ENCODE measurements at regions of chr13 and their contacts with region 1.

Region 1: GRCh38 chr13:74316547-74316946 is 182.3 kb upstream of the KLF12 start:
- DNase-seq: peak in 1 of 35 experiments; percentile 3
- ATAC-seq: peak in 2 of 4 experiments; percentile 38 to 52
- H3K4me3 ChIP-seq: no peak overlapping the region
- H3K4me3 Mint-ChIP-seq: no peak overlapping the region
- H3K27ac ChIP-seq: no peak overlapping the region
- H3K27ac Mint-ChIP-seq: peak overlapping the region in 1 of 2 donors; percentile 45
- H3K4me1 ChIP-seq: peaks cover 0 to 4% of the 10 kb centered on the region in 2 experiments
- H3K4me1 Mint-ChIP-seq: peaks cover 7 to 16% (median 12%) of the 10 kb centered on the region in 3 donors
- H3K27me3 ChIP-seq: no peaks in the 10 kb centered on the region
- H3K27me3 Mint-ChIP-seq: no peaks in the 10 kb centered on the region

Region 2: GRCh38 chr13:74133657-74134201 is 182.8 kb before region 1 on chr13:
- CTCF ChIA-PET with region 1: no interaction called
- POLR2A ChIA-PET with region 1: interaction called in 1 of 2 experiments, 11 read pairs
- DNase-seq: peak; percentile 79 to 97 (median 92)
- ATAC-seq: peak; percentile 61 to 72 (median 64)
- H3K4me3 ChIP-seq: peak overlapping the region; percentile 90 to 95
- H3K4me3 Mint-ChIP-seq: peak overlapping the region in 2 of 3 donors; percentile 97 to 99
- H3K27ac ChIP-seq: peak overlapping the region; percentile 96
- H3K27ac Mint-ChIP-seq: peak overlapping the region; percentile 99 to 100
- H3K4me1 ChIP-seq: peaks cover 25 to 29% of the 10 kb centered on the region in 2 experiments
- H3K4me1 Mint-ChIP-seq: peaks cover 34 to 40% (median 35%) of the 10 kb centered on the region in 3 donors
- H3K27me3 ChIP-seq: no peaks in the 10 kb centered on the region
- H3K27me3 Mint-ChIP-seq: no peaks in the 10 kb centered on the region

Region 3: DNA sequence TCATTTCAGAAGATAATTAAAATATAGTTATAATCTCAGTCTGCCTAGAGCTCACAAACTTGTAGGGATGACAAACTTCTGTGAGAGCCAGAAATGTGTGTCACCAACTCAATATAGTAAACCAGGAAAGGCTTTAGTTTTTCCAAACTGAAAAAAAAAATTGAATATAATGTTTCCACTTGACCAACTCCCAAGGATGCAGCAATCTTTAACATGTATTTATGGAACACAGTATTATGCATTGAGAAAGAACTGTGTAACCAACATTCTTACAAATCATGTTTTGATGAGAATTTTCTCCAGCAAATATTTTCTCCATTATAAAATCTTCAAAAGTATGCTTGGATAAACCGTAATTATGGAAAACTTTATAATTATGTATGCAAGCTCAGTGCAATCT is 132.3 kb before region 1 on chr13:
- CTCF ChIA-PET with region 1: no interaction called
- POLR2A ChIA-PET with region 1: no interaction called
- DNase-seq: no peak
- ATAC-seq: no peak
- H3K4me3 ChIP-seq: no peak overlapping the region
- H3K4me3 Mint-ChIP-seq: no peak overlapping the region
- H3K27ac ChIP-seq: no peak overlapping the region
- H3K27ac Mint-ChIP-seq: no peak overlapping the region
- H3K4me1 ChIP-seq: no peaks in the 10 kb centered on the region
- H3K4me1 Mint-ChIP-seq: no peaks in the 10 kb centered on the region
- H3K27me3 ChIP-seq: no peaks in the 10 kb centered on the region
- H3K27me3 Mint-ChIP-seq: no peaks in the 10 kb centered on the region

Measured in T-cell (primary cell).